CD4-positive, alpha-beta T cell (primary cell): ENCODE measurements at regions of chrX and their contacts with region 1.

Region 1: GRCh38 chrX:18931972-18932371 is 51.9 kb downstream of the PHKA2 start:
- DNase-seq: peak in 2 of 14 experiments; percentile 9 to 11
- ATAC-seq: no peak
- H3K4me3 ChIP-seq: no peak overlapping the region
- H3K4me3 Mint-ChIP-seq: no peak overlapping the region
- H3K27ac ChIP-seq: no peak overlapping the region
- H3K27ac Mint-ChIP-seq: no peak overlapping the region
- H3K4me1 ChIP-seq: no peaks in the 10 kb centered on the region
- H3K4me1 Mint-ChIP-seq: no peaks in the 10 kb centered on the region
- H3K27me3 ChIP-seq: no peaks in the 10 kb centered on the region
- H3K27me3 Mint-ChIP-seq: no peaks in the 10 kb centered on the region
- CTCF ChIP-seq: no peak

Region 2: GRCh38 chrX:19245711-19246269 is 313.8 kb after region 1 on chrX:
- CTCF ChIA-PET with region 1: no interaction called
- POLR2A ChIA-PET with region 1: no interaction called
- intact Hi-C with region 1: no loop called
- DNase-seq: no peak
- ATAC-seq: no peak
- H3K4me3 ChIP-seq: no peak overlapping the region
- H3K4me3 Mint-ChIP-seq: no peak overlapping the region
- H3K27ac ChIP-seq: no peak overlapping the region
- H3K27ac Mint-ChIP-seq: no peak overlapping the region
- H3K4me1 ChIP-seq: no peaks in the 10 kb centered on the region
- H3K4me1 Mint-ChIP-seq: no peaks in the 10 kb centered on the region
- H3K27me3 ChIP-seq: no peaks in the 10 kb centered on the region
- H3K27me3 Mint-ChIP-seq: peaks cover 3% of the 10 kb centered on the region
- CTCF ChIP-seq: no peak

Region 3: GRCh38 chrX:19334945-19335626 is 403.1 kb after region 1 on chrX:
- CTCF ChIA-PET with region 1: no interaction called
- POLR2A ChIA-PET with region 1: no interaction called
- intact Hi-C with region 1: loop called (anchors 2 to 10 kb)
- DNase-seq: peak in 3 of 14 experiments; percentile 10 to 45 (median 30)
- ATAC-seq: peak; percentile 32
- H3K4me3 ChIP-seq: no peak overlapping the region
- H3K4me3 Mint-ChIP-seq: no peak overlapping the region
- H3K27ac ChIP-seq: no peak overlapping the region
- H3K27ac Mint-ChIP-seq: no peak overlapping the region
- H3K4me1 ChIP-seq: no peaks in the 10 kb centered on the region
- H3K4me1 Mint-ChIP-seq: no peaks in the 10 kb centered on the region
- H3K27me3 ChIP-seq: no peaks in the 10 kb centered on the region
- H3K27me3 Mint-ChIP-seq: no peaks in the 10 kb centered on the region
- CTCF ChIP-seq: no peak